Activated B cell treated with CpG ODN at 0.5 μM for 24 hours (primary cell): ENCODE measurements at regions of chr1 and their contacts with region 1.

Region 1: DNA sequence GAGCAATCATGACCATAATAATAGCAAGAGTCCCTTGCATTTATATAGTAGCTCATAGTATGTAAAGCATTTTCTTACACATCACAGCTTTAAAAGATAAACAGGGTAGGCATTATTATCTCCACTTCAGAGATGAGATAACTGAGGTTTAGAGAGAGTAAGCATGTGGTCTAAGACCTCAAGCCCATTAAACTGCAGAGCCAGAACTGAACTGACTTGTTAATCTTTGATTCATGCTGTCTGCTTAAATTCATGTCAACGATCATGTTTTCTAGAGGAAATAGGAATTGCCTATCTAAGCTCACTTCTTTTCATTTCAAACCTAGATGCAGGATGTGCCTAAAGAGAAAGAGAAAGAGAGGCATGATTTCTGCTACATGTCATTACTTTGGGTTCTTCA is 524.8 kb downstream of the PTPRC start:
- DNase-seq: no peak
- ATAC-seq: no peak
- H3K4me3 Mint-ChIP-seq: no peak overlapping the region
- H3K27ac Mint-ChIP-seq: no peak overlapping the region
- H3K4me1 Mint-ChIP-seq: peaks cover 15% of the 10 kb centered on the region
- H3K27me3 Mint-ChIP-seq: peaks cover 15% of the 10 kb centered on the region
- CTCF ChIP-seq: no peak

Region 2: GRCh38 chr1:199151634-199152425 is 11.8 kb before region 1 on chr1:
- CTCF ChIA-PET with region 1: no interaction called
- POLR2A ChIA-PET with region 1: interaction called, 4 read pairs
- intact Hi-C with region 1: loop called (anchors 2 kb)
- DNase-seq: no peak
- ATAC-seq: peak; percentile 62
- H3K4me3 Mint-ChIP-seq: peak overlapping the region; percentile 17
- H3K27ac Mint-ChIP-seq: no peak overlapping the region
- H3K4me1 Mint-ChIP-seq: peaks cover 18% of the 10 kb centered on the region
- H3K27me3 Mint-ChIP-seq: peaks cover 41% of the 10 kb centered on the region
- CTCF ChIP-seq: no peak